Naive thymus-derived CD4-positive, alpha-beta T cell (primary cell): ENCODE measurements at regions of chr20 and their contacts with region 1.

Region 1: DNA sequence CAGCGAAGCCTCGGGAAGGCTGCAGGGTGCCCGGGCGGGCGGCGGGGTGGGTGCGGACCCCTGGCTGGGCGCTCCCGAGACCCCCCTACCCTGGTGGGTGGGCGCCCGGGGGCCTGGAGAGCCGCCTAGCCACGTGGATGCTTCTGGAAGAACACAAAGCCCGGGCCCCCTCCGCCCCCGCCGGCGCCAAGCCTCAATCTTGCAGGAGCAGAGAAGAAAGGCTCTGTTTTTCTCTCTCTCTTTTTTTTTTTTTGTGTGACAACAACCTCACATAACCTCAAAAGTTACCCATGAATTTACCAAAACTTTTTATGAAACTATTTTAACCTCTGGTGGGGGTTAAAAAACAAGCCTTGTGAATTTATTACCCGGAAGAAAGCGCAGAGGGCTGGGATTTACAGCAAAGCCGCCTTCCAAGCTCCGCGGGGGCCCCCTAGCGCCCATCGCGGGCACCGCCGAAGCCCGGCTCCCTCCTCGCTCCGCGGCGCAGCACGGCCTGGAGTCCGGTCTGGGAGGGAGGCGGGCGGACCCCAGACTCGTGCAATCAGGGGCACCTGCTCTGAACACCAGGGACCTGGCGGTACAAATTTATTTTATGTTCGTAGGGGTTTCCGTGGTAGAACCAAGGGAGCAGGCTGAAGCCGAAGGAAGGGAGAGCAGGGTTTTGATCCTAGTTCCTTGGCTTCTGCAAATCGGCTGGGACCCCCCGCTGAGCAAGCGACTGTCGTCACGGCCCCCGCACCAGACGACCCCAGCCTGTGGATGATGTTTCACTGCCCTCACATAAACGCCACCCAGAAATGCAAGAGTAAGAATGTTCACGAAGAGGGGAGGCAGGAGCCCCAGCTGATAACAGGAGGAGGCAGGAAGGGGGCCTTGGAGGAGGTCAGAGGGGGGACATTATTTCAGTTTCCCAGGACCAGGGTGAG is 58.9 kb downstream of the ZNF831 start:
- DNase-seq: peak; percentile 75 to 90 (median 82)
- ATAC-seq: peak; percentile 95
- H3K4me3 ChIP-seq: peak overlapping the region; percentile 54
- H3K4me3 Mint-ChIP-seq: peak overlapping the region; percentile 71 to 92 (median 86)
- H3K27ac ChIP-seq: peak overlapping the region; percentile 62
- H3K27ac Mint-ChIP-seq: peak overlapping the region; percentile 63 to 94 (median 90)
- H3K4me1 ChIP-seq: peaks cover 5 to 13% of the 10 kb centered on the region in 2 donors
- H3K4me1 Mint-ChIP-seq: peaks cover 14 to 43% (median 32%) of the 10 kb centered on the region in 7 donors
- H3K27me3 ChIP-seq: no peaks in the 10 kb centered on the region
- H3K27me3 Mint-ChIP-seq: peaks cover 0 to 14% (median 0%) of the 10 kb centered on the region in 5 donors

Region 2: DNA sequence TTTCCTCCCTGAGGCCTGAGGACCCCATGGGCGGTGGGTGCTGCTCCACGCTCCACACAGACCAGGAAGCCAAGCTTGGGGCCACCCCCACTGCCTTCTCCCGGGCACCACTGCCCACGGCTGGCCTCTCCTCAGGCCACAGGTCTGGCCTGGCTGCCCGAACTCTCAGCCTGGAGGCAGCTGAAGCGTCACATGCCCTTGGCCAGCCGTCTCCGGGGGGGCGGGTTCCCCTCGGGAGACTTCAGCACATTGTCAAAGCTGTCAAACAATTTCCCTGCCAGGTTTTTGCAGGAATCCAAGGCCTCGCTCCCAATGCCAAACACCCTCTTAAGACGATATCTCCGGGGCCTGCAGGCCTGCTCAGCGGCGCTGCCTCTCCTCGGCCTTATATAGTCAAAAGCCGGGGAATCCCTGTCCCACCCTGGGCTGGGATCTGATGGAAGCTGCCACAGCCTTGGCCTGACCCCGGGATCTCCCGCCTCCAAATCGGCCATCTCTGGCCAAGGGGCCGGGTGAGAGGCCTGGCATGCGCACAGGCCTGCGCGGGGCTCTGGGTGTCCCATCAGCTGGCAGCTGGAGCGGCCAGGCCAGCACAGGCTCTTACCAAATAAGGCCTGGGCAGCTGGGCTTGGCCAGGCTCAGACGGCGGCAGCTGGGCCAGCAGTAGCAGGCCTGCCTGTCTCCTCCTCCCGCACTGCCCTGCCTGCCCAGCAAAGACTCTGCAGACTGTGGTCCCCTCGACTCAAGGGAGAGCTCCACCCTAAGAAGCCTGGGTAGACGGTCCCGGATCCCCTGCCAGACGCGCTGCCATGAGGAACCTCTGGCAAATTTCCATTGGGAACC is 1781.6 kb before region 1 on chr20:
- CTCF ChIA-PET with region 1: no interaction called
- POLR2A ChIA-PET with region 1: no interaction called
- intact Hi-C with region 1: no loop called
- DNase-seq: no peak
- ATAC-seq: no peak
- H3K4me3 ChIP-seq: no peak overlapping the region
- H3K4me3 Mint-ChIP-seq: no peak overlapping the region
- H3K27ac ChIP-seq: no peak overlapping the region
- H3K27ac Mint-ChIP-seq: no peak overlapping the region
- H3K4me1 ChIP-seq: no peaks in the 10 kb centered on the region
- H3K4me1 Mint-ChIP-seq: peaks cover 6 to 21% (median 15%) of the 10 kb centered on the region in 7 donors
- H3K27me3 ChIP-seq: no peaks in the 10 kb centered on the region
- H3K27me3 Mint-ChIP-seq: peaks cover 0 to 7% (median 0%) of the 10 kb centered on the region in 5 donors

Region 3: DNA sequence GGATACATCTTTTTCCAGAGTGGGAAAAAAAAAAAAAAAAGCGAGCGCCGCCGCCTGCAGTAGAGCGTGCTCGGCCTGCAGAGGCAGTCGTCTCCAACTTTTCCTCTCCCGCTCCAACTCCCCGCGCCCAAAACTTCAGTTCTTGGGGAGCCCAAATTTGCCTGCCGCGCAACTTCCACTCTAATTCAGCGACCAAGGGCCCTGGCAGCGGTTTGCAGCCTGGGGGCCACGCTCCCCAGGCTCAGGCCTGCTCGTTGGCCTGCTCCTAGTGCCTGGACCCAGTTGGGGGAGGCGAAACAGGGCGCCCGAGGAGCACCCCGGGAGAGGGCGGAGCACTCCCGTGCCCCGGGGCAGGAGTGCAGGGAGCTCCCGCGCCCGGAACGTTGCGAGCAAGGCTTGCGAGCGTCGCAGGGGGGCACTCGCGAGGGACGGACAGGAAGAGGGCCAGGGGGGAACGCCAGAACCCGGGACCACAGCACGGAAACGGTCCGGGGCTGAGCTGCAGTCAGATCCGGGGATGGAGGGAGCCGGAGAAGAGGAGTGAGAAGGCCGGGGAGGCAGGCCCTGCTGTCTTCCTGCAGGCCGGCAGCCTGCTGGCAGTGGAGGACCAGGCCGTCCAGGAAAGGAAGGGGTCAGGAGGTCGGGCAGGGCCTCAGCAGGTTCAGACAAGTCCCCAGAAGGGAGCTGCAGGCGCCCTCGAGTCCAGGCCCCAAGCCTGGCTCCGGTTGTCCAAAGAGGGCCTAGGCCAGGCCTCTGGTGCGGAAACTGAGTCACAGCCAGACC is 571.5 kb before region 1 on chr20 and contains the start of gene STX16:
- CTCF ChIA-PET with region 1: no interaction called
- POLR2A ChIA-PET with region 1: no interaction called
- intact Hi-C with region 1: loop called in 1 of 2 experiments (anchors 10 kb)
- DNase-seq: peak; percentile 76 to 87 (median 84)
- ATAC-seq: peak; percentile 83
- H3K4me3 ChIP-seq: peak within 1 kb of the TSS; percentile 94
- H3K4me3 Mint-ChIP-seq: peak within 1 kb of the TSS; percentile 94 to 100 (median 98)
- H3K27ac ChIP-seq: peak within 1 kb of the TSS; percentile 93
- H3K27ac Mint-ChIP-seq: peak within 1 kb of the TSS; percentile 97 to 100 (median 99)
- H3K4me1 ChIP-seq: peaks cover 24 to 32% of the 10 kb centered on the region in 2 donors
- H3K4me1 Mint-ChIP-seq: peaks cover 14 to 35% (median 28%) of the 10 kb centered on the region in 7 donors
- H3K27me3 ChIP-seq: no peaks in the 10 kb centered on the region
- H3K27me3 Mint-ChIP-seq: peaks cover 0 to 4% (median 0%) of the 10 kb centered on the region in 5 donors
- total RNA-seq, gene STX16: 173 to 225 (median 189) TPM

Region 4: DNA sequence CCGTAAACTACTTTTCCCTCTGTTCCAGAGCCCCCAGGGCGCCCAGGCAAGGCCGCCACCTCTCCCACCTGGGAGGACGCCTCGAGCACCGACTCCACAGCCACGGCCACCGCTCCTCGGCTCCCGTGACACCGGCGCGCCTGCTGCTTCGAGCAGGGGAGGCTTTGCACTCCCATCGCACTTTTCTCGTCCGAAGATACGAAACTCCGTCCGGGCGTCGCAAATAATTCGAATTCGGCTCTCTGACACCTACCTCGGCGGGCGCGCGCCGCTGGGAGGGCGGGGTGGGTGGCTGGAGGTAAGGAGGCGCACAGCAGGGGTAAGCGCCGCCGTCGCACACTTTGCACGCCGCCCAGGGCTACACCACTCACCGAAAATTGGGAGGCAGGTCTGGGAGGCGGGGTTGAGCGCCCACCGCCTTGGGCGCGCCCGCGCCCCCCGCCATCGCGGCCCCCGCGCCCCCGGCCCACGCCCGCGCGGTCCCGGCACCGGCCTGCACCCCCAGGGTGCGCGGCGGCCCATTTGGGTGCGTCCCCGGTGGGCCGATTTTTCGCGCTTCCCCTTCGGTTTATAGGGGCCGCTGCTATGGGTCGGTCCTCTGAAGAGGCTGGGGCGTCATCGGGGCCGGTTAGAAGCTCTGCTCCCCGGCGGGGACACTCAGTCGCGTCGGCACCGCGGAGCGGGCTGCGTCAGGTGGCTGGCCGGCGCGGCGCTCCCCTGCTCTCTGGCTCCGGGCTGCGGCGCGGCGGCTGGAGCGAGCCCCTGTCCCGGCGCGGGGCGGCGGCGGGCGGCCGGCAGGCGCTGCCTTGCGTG is 333.8 kb before region 1 on chr20:
- CTCF ChIA-PET with region 1: no interaction called
- POLR2A ChIA-PET with region 1: no interaction called
- intact Hi-C with region 1: loop called in 1 of 2 experiments (anchors 5 kb)
- DNase-seq: peak; percentile 64 to 91 (median 86)
- ATAC-seq: peak; percentile 76
- H3K4me3 ChIP-seq: peak overlapping the region; percentile 68
- H3K4me3 Mint-ChIP-seq: peak overlapping the region; percentile 81 to 94 (median 87)
- H3K27ac ChIP-seq: peak overlapping the region; percentile 95
- H3K27ac Mint-ChIP-seq: peak overlapping the region; percentile 67 to 97 (median 90)
- H3K4me1 ChIP-seq: peaks cover 4 to 6% of the 10 kb centered on the region in 2 donors
- H3K4me1 Mint-ChIP-seq: peaks cover 15 to 46% (median 37%) of the 10 kb centered on the region in 7 donors
- H3K27me3 ChIP-seq: no peaks in the 10 kb centered on the region
- H3K27me3 Mint-ChIP-seq: peaks cover 0 to 3% (median 0%) of the 10 kb centered on the region in 5 donors

Region 5: DNA sequence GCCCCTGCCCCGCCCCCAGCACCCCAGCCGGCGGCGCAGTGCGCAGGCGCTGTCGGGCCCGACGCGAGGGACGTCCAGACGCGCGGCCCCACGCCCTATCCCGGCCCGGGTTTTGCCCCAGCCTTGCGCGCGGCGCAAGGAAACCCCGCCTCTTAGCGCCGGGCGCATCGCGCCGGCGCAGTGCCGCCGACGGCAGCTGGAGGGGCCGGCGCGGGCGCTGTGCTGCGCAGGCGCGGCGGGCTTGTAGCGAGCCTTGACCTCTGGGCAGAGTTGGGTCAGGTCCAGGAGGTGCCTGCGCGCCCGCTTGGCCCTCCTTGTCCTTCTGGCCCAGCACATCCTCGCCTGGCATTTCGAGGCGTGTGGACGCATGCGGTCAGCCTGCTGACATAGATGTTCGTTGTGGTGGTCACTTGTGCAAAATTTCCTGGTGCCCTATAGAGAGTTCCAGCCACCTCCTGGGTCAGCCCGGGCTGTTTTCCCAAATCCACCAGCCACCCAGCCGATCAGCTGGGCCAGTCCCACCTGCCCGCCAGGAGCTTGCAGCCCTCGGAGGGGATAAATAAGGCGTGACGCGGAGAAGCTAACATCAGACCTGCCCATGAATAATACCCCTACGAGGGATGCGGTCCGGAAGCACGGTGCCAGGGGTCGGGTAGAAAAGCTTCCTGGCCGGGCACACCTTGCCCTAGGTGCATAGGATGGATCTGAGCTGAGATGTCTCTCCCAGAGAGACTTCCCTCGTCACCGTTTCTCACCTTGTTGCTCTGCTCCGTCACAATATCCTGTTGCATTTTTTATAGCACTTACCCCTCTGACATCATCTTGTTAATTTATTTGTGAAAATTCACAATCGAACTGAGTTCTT is 179.5 kb before region 1 on chr20:
- CTCF ChIA-PET with region 1: no interaction called
- POLR2A ChIA-PET with region 1: interaction called, 3 read pairs
- intact Hi-C with region 1: loop called in 1 of 2 experiments (anchors 5 kb)
- DNase-seq: peak; percentile 90 to 98 (median 94)
- ATAC-seq: peak; percentile 98
- H3K4me3 ChIP-seq: peak overlapping the region; percentile 76
- H3K4me3 Mint-ChIP-seq: peak overlapping the region; percentile 81 to 96 (median 90)
- H3K27ac ChIP-seq: peak overlapping the region; percentile 93
- H3K27ac Mint-ChIP-seq: peak overlapping the region; percentile 76 to 96 (median 91)
- H3K4me1 ChIP-seq: peaks cover 30 to 32% of the 10 kb centered on the region in 2 donors
- H3K4me1 Mint-ChIP-seq: peaks cover 35 to 54% (median 50%) of the 10 kb centered on the region in 7 donors
- H3K27me3 ChIP-seq: no peaks in the 10 kb centered on the region
- H3K27me3 Mint-ChIP-seq: no peaks in the 10 kb centered on the region

Region 6: GRCh38 chr20:59120491-59120890 is 102.0 kb before region 1 on chr20:
- CTCF ChIA-PET with region 1: interaction called, 6 read pairs
- POLR2A ChIA-PET with region 1: interaction called, 5 read pairs
- intact Hi-C with region 1: loop called in 1 of 2 experiments (anchors 1 kb)
- DNase-seq: peak in 7 of 9 donors; percentile 23 to 48 (median 35)
- ATAC-seq: peak; percentile 40
- H3K4me3 ChIP-seq: no peak overlapping the region
- H3K4me3 Mint-ChIP-seq: peak overlapping the region; percentile 33 to 96 (median 56)
- H3K27ac ChIP-seq: peak overlapping the region; percentile 94
- H3K27ac Mint-ChIP-seq: peak overlapping the region; percentile 64 to 100 (median 100)
- H3K4me1 ChIP-seq: peaks cover 60 to 84% of the 10 kb centered on the region in 2 donors
- H3K4me1 Mint-ChIP-seq: peaks cover 51 to 98% (median 90%) of the 10 kb centered on the region in 7 donors
- H3K27me3 ChIP-seq: no peaks in the 10 kb centered on the region
- H3K27me3 Mint-ChIP-seq: no peaks in the 10 kb centered on the region

Region 7: GRCh38 chr20:59207742-59208357 is 14.7 kb before region 1 on chr20:
- CTCF ChIA-PET with region 1: interaction called, 13 read pairs
- POLR2A ChIA-PET with region 1: no interaction called
- intact Hi-C with region 1: loop called in 1 of 2 experiments (anchors 1 kb)
- DNase-seq: peak; percentile 62 to 82 (median 78)
- ATAC-seq: peak; percentile 98
- H3K4me3 ChIP-seq: no peak overlapping the region
- H3K4me3 Mint-ChIP-seq: peak overlapping the region in 3 of 10 donors; percentile 8 to 35 (median 12)
- H3K27ac ChIP-seq: no peak overlapping the region
- H3K27ac Mint-ChIP-seq: peak overlapping the region in 8 of 9 donors; percentile 63 to 93 (median 84)
- H3K4me1 ChIP-seq: peaks cover 7 to 18% of the 10 kb centered on the region in 2 donors
- H3K4me1 Mint-ChIP-seq: peaks cover 13 to 47% (median 42%) of the 10 kb centered on the region in 7 donors
- H3K27me3 ChIP-seq: no peaks in the 10 kb centered on the region
- H3K27me3 Mint-ChIP-seq: no peaks in the 10 kb centered on the region

Region 8: GRCh38 chr20:59495894-59496510 is 273.5 kb after region 1 on chr20:
- CTCF ChIA-PET with region 1: interaction called, 3 read pairs
- POLR2A ChIA-PET with region 1: no interaction called
- intact Hi-C with region 1: loop called in 1 of 2 experiments (anchors 10 kb)
- DNase-seq: peak; percentile 41 to 71 (median 61)
- ATAC-seq: peak; percentile 77
- H3K4me3 ChIP-seq: no peak overlapping the region
- H3K4me3 Mint-ChIP-seq: no peak overlapping the region
- H3K27ac ChIP-seq: no peak overlapping the region
- H3K27ac Mint-ChIP-seq: no peak overlapping the region
- H3K4me1 ChIP-seq: no peaks in the 10 kb centered on the region
- H3K4me1 Mint-ChIP-seq: no peaks in the 10 kb centered on the region
- H3K27me3 ChIP-seq: no peaks in the 10 kb centered on the region
- H3K27me3 Mint-ChIP-seq: peaks cover 17 to 32% (median 25%) of the 10 kb centered on the region in 5 donors